ENCODE measurements at regions of chr1 and their contacts with region 1.

Region 1: DNA sequence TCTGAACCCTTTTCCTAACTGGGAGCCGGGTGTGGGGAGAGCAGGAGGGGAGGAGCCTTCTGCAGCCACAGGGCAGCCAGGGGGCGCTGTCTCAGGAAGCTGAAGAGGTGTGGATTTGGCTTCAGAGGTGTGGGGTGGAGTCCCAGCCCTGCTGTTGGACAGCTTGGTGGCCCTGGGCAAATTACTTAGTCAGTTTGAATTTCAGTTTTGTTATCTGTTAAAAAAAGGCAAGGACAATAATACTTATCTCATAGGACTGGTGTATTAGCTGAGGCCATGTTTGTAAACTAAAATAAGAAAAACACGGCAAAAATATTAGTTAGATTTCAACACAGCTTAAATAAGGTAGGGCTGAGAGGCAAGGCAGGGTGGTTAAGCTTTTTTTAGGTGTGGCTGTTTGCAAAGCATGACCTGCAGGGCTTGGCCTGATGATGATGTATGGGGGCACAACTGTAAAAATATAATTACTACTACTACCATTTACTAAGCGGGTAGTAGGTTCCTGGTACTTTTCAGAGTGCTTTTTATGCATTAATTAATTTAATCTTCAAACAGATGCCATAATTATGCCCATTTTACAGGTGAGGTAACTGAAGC is 111.8 kb downstream of the PLXNA2 start:
- DNase-seq: no peak
- H3K4me3 ChIP-seq: no peak overlapping the region
- CTCF ChIP-seq: peak; percentile 88

Region 2: DNA sequence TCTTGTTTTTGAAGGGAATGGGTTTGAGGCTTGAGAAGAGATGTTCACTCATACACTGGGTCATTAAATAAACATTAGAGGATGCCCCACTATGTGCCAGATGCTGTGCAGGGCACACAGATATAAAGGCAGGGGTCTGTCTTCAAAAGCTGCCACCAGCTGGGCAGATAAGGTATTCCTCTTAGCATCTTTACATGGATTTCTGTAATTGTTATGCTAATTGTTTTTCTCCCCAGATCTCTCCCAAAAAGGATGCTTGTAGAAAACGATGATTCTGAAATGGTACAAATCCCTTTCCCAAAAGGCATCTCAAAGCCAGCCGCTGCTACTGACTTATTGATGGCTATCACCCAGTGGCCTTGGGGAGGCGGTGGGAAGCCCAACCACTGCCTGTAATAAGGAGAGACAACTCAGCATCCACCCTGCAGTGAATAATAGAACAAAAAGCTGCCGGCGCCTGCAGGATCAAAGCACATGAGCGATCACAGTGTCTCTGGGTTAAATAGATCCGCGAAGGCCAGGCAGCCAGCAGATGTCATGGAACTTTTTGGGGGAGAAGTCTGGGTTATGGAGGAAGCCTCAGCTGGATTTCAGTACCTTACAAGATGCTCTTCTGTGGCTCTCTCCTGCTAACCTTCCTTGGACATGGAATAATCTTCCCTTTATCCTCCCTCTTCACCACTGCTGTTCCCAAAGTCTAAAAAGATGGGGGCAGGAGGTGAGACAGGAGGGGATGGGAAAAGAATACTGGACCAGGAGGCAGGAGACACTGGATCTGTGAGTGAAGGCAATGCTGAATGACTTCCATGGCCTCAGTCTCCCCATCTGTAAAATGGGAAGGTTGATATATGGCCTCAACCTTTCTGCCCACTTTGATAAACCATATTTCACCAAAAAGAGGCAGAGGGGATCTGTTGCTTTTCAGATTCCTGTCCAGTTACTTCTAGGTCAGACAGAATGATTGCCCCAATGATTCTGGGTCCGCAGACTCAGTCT is 166.7 kb before region 1 on chr1:
- CTCF ChIA-PET with region 1: no interaction called
- POLR2A ChIA-PET with region 1: no interaction called
- DNase-seq: no peak
- H3K4me3 ChIP-seq: no peak overlapping the region
- CTCF ChIP-seq: no peak

Region 3: GRCh38 chr1:208115924-208116640 is 16.3 kb before region 1 on chr1:
- CTCF ChIA-PET with region 1: interaction called, 74 read pairs
- POLR2A ChIA-PET with region 1: no interaction called
- DNase-seq: no peak
- H3K4me3 ChIP-seq: no peak overlapping the region
- CTCF ChIP-seq: no peak

Region 4: DNA sequence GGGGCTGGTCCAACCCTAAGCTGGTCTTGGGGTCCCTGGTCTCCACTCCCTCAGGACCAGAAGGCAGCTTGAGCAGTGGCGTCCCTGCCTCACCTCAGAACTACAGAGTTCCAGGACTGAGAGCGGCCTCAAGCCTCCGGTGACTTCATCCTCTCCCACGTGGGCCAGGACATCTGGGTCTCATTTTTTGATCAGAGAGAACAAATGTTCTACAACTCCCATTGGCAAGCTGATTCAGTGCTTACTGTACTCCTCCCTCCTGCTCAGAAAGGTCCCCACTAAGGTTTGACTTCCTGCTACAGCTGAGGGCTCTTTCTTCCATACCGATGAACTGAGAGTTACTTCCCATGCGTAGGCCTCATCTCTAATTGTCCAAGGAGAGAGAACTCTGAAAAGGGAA is 33.3 kb after region 1 on chr1:
- CTCF ChIA-PET with region 1: interaction called, 24 read pairs
- POLR2A ChIA-PET with region 1: no interaction called
- DNase-seq: no peak
- H3K4me3 ChIP-seq: no peak overlapping the region
- CTCF ChIP-seq: no peak

Region 5: GRCh38 chr1:208207388-208208131 is 75.2 kb after region 1 on chr1:
- CTCF ChIA-PET with region 1: interaction called, 14 read pairs
- POLR2A ChIA-PET with region 1: no interaction called
- DNase-seq: peak; percentile 85
- H3K4me3 ChIP-seq: no peak overlapping the region
- CTCF ChIP-seq: no peak